Gastrocnemius medialis (tissue), 4 donors: ENCODE measurements at regions of chr4 and their contacts with region 1.

Region 1: DNA sequence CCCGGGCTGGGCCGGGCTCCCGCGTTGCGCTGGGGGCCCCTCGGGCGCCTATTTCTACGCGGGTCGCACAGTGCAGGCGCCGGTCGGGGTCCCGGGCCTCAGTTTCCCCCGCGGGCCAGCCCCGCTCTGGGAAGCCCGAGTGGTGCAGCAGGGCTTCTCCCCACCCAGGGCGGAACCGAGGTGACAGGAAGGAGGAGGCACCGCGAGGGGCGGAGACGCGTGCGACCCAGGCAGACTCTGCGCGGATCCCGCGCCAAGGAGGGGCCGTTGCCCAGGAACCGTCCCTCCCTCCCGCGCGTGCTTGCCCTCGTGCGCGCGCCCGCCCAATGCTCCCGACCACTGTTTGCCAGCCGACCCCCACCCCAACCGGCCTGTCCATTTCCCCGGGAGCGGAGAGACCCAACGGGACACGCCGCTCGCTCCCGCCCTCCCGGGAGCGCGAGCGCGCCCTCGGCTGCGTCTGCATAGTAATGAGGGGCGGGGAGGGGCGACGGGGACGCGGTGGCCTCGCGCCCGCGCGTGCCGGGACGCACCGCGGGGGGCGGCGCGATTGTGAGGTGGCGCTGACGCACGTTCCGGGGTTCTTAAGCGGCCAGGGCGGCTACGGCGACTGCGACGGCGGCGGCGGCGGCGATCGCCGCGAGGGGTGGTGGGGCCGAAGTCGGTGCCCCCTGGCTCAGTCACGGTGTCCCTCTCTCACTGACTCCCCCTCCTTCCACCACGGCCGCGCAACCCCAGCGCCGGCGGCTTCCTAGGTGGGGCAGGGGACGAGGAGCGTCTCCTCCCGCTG is at the start of gene CPEB2:
- DNase-seq: peak; percentile 88 to 95
- ATAC-seq: peak; percentile 62 to 69
- H3K4me3 ChIP-seq: peak within 1 kb of the TSS; percentile 71 to 92 (median 84)
- H3K27ac ChIP-seq: peak within 1 kb of the TSS; percentile 96 to 99 (median 98)
- H3K4me1 ChIP-seq: peaks cover 17 to 18% of the 10 kb centered on the region in 2 donors
- H3K27me3 ChIP-seq: no peaks in the 10 kb centered on the region
- CTCF ChIP-seq: no peak
- POLR2A ChIP-seq: peak; percentile 98 to 100
- total RNA-seq, gene CPEB2: 8.7 to 13.1 (median 10.1) TPM

Region 2: GRCh38 chr4:13484122-13484748 is 1517.8 kb before region 1 on chr4 and contains the start of gene RAB28:
- in situ Hi-C with region 1: no loop called
- intact Hi-C with region 1: loop called (anchors 5 kb)
- DNase-seq: peak; percentile 88 to 90
- ATAC-seq: peak; percentile 96
- H3K4me3 ChIP-seq: peak within 1 kb of the TSS; percentile 83 to 98 (median 87)
- H3K27ac ChIP-seq: peak within 1 kb of the TSS; percentile 86 to 94 (median 92)
- H3K4me1 ChIP-seq: peaks cover 16 to 23% of the 10 kb centered on the region in 2 donors
- H3K27me3 ChIP-seq: peaks cover 0 to 9% (median 0%) of the 10 kb centered on the region in 3 donors
- CTCF ChIP-seq: no peak
- POLR2A ChIP-seq: peak; percentile 59 to 67
- total RNA-seq, gene RAB28: 3.9 to 8.0 (median 6.7) TPM

Region 3: DNA sequence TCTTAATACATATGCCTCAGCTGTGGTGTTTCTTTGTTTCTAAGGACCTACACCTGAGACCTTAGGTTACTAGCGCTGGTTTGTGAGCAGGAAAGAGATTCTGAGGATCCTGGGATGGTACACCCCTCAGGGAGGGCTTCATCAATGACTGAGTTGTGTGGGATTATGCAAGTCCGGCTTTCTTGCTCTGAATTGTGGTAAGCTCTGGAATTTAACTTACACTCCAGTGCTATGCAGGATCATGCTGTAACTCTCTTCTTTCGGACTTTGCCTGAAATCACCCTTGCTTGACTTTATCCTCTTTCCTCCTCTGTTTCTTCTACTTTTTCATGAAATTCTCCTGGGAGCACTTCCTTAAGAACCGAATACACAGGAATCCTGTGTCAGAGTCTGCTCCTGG is 943.1 kb before region 1 on chr4:
- in situ Hi-C with region 1: no loop called
- intact Hi-C with region 1: no loop called
- DNase-seq: no peak
- ATAC-seq: no peak
- H3K4me3 ChIP-seq: no peak overlapping the region
- H3K27ac ChIP-seq: no peak overlapping the region
- H3K4me1 ChIP-seq: no peaks in the 10 kb centered on the region
- H3K27me3 ChIP-seq: no peaks in the 10 kb centered on the region
- CTCF ChIP-seq: no peak
- POLR2A ChIP-seq: no peak

Region 4: GRCh38 chr4:14841801-14842768 is 160.0 kb before region 1 on chr4:
- in situ Hi-C with region 1: no loop called
- intact Hi-C with region 1: no loop called
- DNase-seq: peak in 1 of 2 donors; percentile 28
- ATAC-seq: peak; percentile 76 to 86
- H3K4me3 ChIP-seq: no peak overlapping the region
- H3K27ac ChIP-seq: peak overlapping the region in 3 of 4 donors; percentile 30 to 46 (median 45)
- H3K4me1 ChIP-seq: peaks cover 3 to 17% of the 10 kb centered on the region in 2 donors
- H3K27me3 ChIP-seq: no peaks in the 10 kb centered on the region
- CTCF ChIP-seq: no peak
- POLR2A ChIP-seq: no peak

Region 5: GRCh38 chr4:15457406-15458201 is 455.5 kb after region 1 on chr4:
- in situ Hi-C with region 1: loop called in 2 of 4 experiments (anchors 25 kb)
- intact Hi-C with region 1: no loop called
- DNase-seq: no peak
- ATAC-seq: peak; percentile 36 to 70
- H3K4me3 ChIP-seq: no peak overlapping the region
- H3K27ac ChIP-seq: peak overlapping the region in 2 of 4 donors; percentile 0 to 42
- H3K4me1 ChIP-seq: peaks cover 0 to 13% of the 10 kb centered on the region in 2 donors
- H3K27me3 ChIP-seq: no peaks in the 10 kb centered on the region
- CTCF ChIP-seq: peak; percentile 52 to 77 (median 65)
- POLR2A ChIP-seq: no peak

Region 6: DNA sequence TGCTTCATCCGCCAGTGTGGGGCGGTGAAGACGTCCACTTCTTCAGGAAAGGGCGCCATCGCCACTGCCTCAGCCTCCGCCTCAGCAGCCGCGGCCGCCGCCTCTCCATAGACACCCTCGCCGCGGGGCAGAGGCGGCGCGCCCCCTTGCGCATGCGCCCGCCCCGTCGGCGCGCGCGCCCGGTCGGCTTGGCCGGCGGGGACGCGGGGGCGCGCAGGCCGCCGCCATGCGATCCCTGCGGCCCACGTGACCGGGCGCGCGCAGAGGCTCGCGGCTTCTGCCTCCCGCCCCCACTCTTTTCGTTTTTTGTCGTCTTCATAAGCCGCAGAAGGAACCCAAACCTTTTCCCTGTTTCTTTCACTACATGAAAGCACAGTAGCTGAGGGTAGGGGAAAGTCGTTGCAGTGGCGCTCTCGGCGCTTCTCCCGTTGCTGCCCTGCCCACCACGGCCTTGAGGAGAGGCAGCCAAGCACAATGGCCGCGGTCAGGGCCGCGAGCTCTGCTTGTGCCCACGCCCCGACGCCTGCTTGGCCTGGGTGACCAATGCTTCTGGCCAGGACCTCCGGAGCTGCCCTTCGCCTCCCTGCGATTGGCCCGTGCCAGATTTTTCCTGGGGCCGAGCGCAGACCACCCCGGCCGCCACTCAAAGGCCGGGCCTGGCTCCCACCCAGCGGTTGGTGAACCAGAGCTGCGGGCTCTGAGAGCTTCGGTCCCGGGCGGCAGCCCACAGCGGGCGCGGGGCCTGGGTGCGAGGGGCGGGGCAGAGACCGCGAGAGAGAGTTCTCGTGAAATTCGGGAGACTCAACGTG is 653.4 kb after region 1 on chr4 and contains the start of gene FBXL5:
- in situ Hi-C with region 1: loop called in 1 of 4 experiments (anchors 25 kb)
- intact Hi-C with region 1: loop called (anchors 2 kb)
- DNase-seq: peak; percentile 42 to 74
- ATAC-seq: peak; percentile 78 to 87
- H3K4me3 ChIP-seq: peak within 1 kb of the TSS; percentile 74 to 94 (median 83)
- H3K27ac ChIP-seq: peak within 1 kb of the TSS; percentile 97 to 100 (median 98)
- H3K4me1 ChIP-seq: peaks cover 39 to 45% of the 10 kb centered on the region in 2 donors
- H3K27me3 ChIP-seq: no peaks in the 10 kb centered on the region
- CTCF ChIP-seq: no peak
- POLR2A ChIP-seq: peak; percentile 81 to 84
- total RNA-seq, gene FBXL5: 81.7 to 106 (median 89.8) TPM

Region 7: GRCh38 chr4:16205298-16206164 is 1203.5 kb after region 1 on chr4:
- in situ Hi-C with region 1: loop called in 1 of 4 experiments (anchors 25 kb)
- intact Hi-C with region 1: no loop called
- DNase-seq: no peak
- ATAC-seq: peak; percentile 60 to 87
- H3K4me3 ChIP-seq: no peak overlapping the region
- H3K27ac ChIP-seq: peak overlapping the region in 1 of 4 donors; percentile 40
- H3K4me1 ChIP-seq: peaks cover 34 to 45% of the 10 kb centered on the region in 2 donors
- H3K27me3 ChIP-seq: no peaks in the 10 kb centered on the region
- CTCF ChIP-seq: peak; percentile 36 to 60 (median 45)
- POLR2A ChIP-seq: no peak